ENCODE measurements at regions of chr12 and their contacts with region 1.

Region 1: GRCh38 chr12:9750276-9751203 is 10.2 kb downstream of the CD69 start:
- DNase-seq: peak; percentile 73
- ATAC-seq: peak; percentile 66
- H3K4me3 Mint-ChIP-seq: peak overlapping the region; percentile 67
- H3K27ac Mint-ChIP-seq: peak overlapping the region; percentile 86
- H3K4me1 Mint-ChIP-seq: peaks cover 57% of the 10 kb centered on the region
- H3K27me3 Mint-ChIP-seq: no peaks in the 10 kb centered on the region
- CTCF ChIP-seq: peak; percentile 78

Region 2: DNA sequence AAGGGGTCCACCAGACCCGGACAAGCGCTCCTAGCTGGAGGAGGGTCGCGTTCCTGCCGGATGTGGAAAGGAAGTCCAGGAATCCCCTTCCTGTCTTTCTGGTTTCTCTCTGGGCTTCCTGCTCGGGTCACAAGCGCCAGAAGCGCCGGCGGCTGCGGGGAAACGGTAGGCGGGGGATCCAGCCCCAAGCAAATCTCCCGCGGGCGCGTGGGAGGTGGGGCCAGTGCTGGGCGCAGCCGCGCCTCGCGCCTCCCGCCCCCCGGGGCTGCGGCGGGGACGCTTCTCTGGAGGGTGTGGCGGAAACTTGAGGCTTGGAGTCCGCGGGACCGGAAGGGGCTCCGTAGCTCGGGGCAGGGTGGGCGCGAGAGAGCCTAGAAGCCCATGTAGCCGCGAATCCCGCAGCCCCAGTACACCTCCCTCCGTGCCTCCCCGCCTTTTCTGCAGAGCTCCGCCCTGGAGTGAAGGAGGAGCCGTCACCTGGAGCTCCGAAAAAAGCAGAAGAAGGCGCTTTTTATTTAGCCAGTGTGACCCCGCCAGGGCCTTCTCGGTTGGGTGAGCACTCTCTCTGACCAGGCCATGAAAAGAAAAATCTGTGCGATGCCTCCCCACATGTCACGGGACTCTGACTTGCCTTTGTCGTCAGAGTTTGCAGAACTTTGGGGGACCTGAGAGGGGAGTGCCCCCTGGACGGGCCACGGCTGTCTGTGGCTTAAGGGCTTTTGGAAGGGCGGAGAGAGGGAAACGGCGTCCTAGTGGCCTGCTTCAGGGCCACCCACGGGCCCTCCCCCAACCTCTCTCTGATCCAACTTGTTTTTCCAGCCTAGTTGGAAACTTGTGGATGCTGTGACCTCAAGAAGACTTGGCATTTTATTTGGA is 102.5 kb before region 1 on chr12:
- CTCF ChIA-PET with region 1: interaction called, 6 read pairs
- POLR2A ChIA-PET with region 1: interaction called, 220 read pairs
- intact Hi-C with region 1: no loop called
- DNase-seq: peak; percentile 95
- ATAC-seq: peak; percentile 72
- H3K4me3 Mint-ChIP-seq: peak overlapping the region; percentile 98
- H3K27ac Mint-ChIP-seq: peak overlapping the region; percentile 99
- H3K4me1 Mint-ChIP-seq: peaks cover 53% of the 10 kb centered on the region
- H3K27me3 Mint-ChIP-seq: no peaks in the 10 kb centered on the region
- CTCF ChIP-seq: no peak

Region 3: GRCh38 chr12:9699898-9700605 is 50.5 kb before region 1 on chr12:
- CTCF ChIA-PET with region 1: no interaction called
- POLR2A ChIA-PET with region 1: no interaction called
- intact Hi-C with region 1: no loop called
- DNase-seq: no peak
- ATAC-seq: no peak
- H3K4me3 Mint-ChIP-seq: no peak overlapping the region
- H3K27ac Mint-ChIP-seq: peak overlapping the region; percentile 95
- H3K4me1 Mint-ChIP-seq: peaks cover 68% of the 10 kb centered on the region
- H3K27me3 Mint-ChIP-seq: no peaks in the 10 kb centered on the region
- CTCF ChIP-seq: no peak

Region 4: GRCh38 chr12:9760699-9761418 is 10.3 kb after region 1 on chr12 and contains the start of gene CD69:
- CTCF ChIA-PET with region 1: interaction called, 47 read pairs
- POLR2A ChIA-PET with region 1: interaction called, 99 read pairs
- intact Hi-C with region 1: no loop called
- DNase-seq: peak; percentile 89
- ATAC-seq: peak; percentile 57
- H3K4me3 Mint-ChIP-seq: peak within 1 kb of the TSS; percentile 97
- H3K27ac Mint-ChIP-seq: peak within 1 kb of the TSS; percentile 99
- H3K4me1 Mint-ChIP-seq: peaks cover 34% of the 10 kb centered on the region
- H3K27me3 Mint-ChIP-seq: no peaks in the 10 kb centered on the region
- CTCF ChIP-seq: no peak
- total RNA-seq, gene CD69: 166 to 174 TPM

Region 5: DNA sequence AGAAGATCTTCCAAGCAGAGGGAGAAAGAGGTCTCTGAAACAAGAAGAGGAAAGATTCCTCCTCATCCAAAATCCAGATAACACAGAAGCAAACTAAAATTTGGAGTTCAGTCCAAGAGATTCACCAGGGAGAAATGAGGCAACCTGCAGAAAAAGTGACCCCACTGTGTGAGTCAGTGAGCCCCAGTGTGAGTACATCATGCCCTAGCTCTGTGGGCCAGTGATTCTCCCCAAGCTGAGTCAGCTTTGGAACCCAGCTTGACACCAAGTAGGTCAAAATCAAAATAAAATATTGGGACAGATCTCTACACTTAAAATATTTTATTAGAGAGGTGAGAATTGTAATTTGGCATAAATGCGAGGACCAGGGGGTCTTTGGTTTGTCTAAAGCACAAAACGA is 101.4 kb after region 1 on chr12:
- CTCF ChIA-PET with region 1: interaction called, 14 read pairs
- POLR2A ChIA-PET with region 1: interaction called, 3 read pairs
- intact Hi-C with region 1: no loop called
- DNase-seq: peak; percentile 32
- ATAC-seq: peak; percentile 49
- H3K4me3 Mint-ChIP-seq: no peak overlapping the region
- H3K27ac Mint-ChIP-seq: no peak overlapping the region
- H3K4me1 Mint-ChIP-seq: peaks cover 44% of the 10 kb centered on the region
- H3K27me3 Mint-ChIP-seq: no peaks in the 10 kb centered on the region
- CTCF ChIP-seq: no peak

Region 6: GRCh38 chr12:9906873-9907272 is 156.3 kb after region 1 on chr12:
- CTCF ChIA-PET with region 1: interaction called, 15 read pairs
- POLR2A ChIA-PET with region 1: interaction called, 4 read pairs
- intact Hi-C with region 1: no loop called
- DNase-seq: peak; percentile 55
- ATAC-seq: peak; percentile 98
- H3K4me3 Mint-ChIP-seq: peak overlapping the region; percentile 6
- H3K27ac Mint-ChIP-seq: peak overlapping the region; percentile 78
- H3K4me1 Mint-ChIP-seq: peaks cover 30% of the 10 kb centered on the region
- H3K27me3 Mint-ChIP-seq: no peaks in the 10 kb centered on the region
- CTCF ChIP-seq: no peak

Region 7: DNA sequence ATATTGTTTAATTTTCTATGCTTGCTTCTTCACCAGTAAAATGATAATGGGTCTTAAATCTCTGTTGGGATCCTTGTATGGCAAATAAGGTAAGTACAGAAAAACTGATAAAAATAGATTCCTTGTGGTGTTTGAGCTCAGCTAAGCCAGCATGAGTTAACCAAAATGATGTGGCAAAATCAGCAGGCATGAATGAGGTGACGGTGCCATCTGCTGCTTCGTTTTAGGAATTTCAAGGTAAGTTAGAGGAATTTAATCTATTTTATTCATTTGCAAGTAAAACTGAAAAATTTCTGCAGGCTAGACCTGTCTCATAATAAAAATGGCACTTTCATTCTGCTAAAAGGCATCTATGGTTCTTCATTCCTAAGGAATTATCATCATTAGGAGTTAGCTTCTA is 389.5 kb after region 1 on chr12:
- CTCF ChIA-PET with region 1: interaction called, 24 read pairs
- POLR2A ChIA-PET with region 1: interaction called, 3 read pairs
- intact Hi-C with region 1: loop called (anchors 10 kb)
- DNase-seq: peak; percentile 66
- ATAC-seq: peak; percentile 49
- H3K4me3 Mint-ChIP-seq: no peak overlapping the region
- H3K27ac Mint-ChIP-seq: no peak overlapping the region
- H3K4me1 Mint-ChIP-seq: peaks cover 2% of the 10 kb centered on the region
- H3K27me3 Mint-ChIP-seq: peaks cover 6% of the 10 kb centered on the region
- CTCF ChIP-seq: peak; percentile 66

Region 8: GRCh38 chr12:10167588-10167987 is 417.0 kb after region 1 on chr12:
- CTCF ChIA-PET with region 1: no interaction called
- POLR2A ChIA-PET with region 1: no interaction called
- intact Hi-C with region 1: no loop called
- DNase-seq: no peak
- ATAC-seq: no peak
- H3K4me3 Mint-ChIP-seq: no peak overlapping the region
- H3K27ac Mint-ChIP-seq: no peak overlapping the region
- H3K4me1 Mint-ChIP-seq: no peaks in the 10 kb centered on the region
- H3K27me3 Mint-ChIP-seq: peaks cover 7% of the 10 kb centered on the region
- CTCF ChIP-seq: no peak

Measured in activated CD8-positive, alpha-beta T cell treated with anti-CD3 and anti-CD28 coated beads for 36 hours (primary cell).